ENCODE measurements at regions of chr10 and their contacts with region 1.

Region 1: GRCh38 chr10:32256613-32257437 is 90.1 kb downstream of the EPC1 start:
- DNase-seq: peak; percentile 65
- CTCF ChIP-seq: peak; percentile 89

Region 2: GRCh38 chr10:31479752-31480151 is 777.1 kb before region 1 on chr10:
- in situ Hi-C with region 1: no loop called
- DNase-seq: no peak
- CTCF ChIP-seq: no peak

Region 3: DNA sequence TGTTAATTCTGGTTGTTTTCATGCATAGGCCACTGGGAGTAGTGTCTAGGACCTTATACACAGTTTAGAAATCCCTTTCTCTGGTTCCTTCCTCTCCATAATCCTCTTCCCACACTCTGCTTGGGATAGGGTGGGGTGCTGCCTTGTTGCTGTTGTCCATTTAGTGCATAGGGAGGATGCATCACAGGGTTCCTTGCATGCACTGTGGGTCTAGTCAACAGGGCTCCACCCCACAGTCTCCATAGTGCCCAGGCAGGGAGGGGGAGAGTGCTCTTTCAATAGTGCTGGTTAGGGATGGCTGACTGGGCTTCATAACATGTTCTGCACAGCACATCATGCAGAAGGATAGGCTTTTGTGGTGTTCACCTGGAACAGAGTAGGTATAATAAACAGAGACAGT is 409.3 kb before region 1 on chr10:
- in situ Hi-C with region 1: no loop called
- DNase-seq: no peak
- CTCF ChIP-seq: no peak

Region 4: GRCh38 chr10:32346134-32346550 is 89.3 kb after region 1 on chr10:
- in situ Hi-C with region 1: loop called (anchors 5 kb)
- DNase-seq: peak; percentile 96
- CTCF ChIP-seq: peak; percentile 94

Measured in GM13977 (cell line).